ENCODE measurements at regions of chr5 and their contacts with region 1.

Region 1: DNA sequence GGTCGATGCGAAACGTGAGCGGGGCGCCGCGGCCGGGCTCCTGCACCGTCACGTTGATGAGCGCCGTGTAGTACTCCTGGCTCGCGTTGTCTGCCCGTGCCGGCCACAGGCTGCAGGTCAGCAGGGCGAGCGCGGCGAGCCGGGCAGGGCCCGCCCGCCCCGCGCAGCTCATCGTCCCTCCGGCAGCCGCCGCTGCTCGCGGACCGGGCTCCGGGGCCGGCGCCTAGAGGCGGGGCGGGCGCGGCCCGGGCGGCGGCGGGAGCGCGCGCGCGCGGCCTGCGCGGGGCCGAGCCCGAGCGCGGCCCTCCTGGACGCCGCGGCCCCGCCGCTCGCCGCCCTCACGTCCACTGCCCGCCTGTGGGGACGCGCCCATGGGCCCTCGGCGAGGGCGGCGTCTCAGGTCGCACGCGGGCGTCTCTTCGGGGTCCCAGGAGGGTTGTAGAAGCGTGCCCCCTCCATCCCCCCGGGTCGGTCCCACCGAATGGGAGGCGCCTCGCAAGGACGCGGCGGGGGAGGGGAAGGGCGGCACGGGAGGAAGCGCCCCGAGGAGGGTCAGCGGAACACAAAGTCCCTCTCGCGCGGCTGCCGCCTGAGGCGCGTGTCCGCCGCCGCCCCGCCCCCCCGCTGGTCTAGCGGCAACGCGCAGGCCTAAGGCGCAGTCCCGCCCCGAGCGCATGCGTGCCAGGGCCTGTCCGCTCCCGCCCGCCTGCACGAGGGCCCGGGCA is at the start of gene RNF130:
- DNase-seq: peak; percentile 92
- H3K4me3 ChIP-seq: peak within 1 kb of the TSS; percentile 86 to 89 (median 87)
- H3K27ac ChIP-seq: peak within 1 kb of the TSS; percentile 71
- H3K4me1 ChIP-seq: peaks cover 8% of the 10 kb centered on the region
- H3K27me3 ChIP-seq: peaks cover 0 to 5% of the 10 kb centered on the region in 2 experiments
- CTCF ChIP-seq: no peak
- POLR2A ChIP-seq: peak; percentile 54
- total RNA-seq, gene RNF130: 43.0 and 44.0 TPM in 2 replicates

Region 2: GRCh38 chr5:179858586-179859427 is 212.9 kb before region 1 on chr5 and contains the start of gene MRNIP:
- CTCF ChIA-PET with region 1: no interaction called
- POLR2A ChIA-PET with region 1: no interaction called
- dilution Hi-C with region 1: no loop called
- intact Hi-C with region 1: loop called (anchors 5 kb)
- DNase-seq: peak; percentile 97
- H3K4me3 ChIP-seq: peak within 1 kb of the TSS; percentile 60 to 97 (median 75)
- H3K27ac ChIP-seq: no peak within 1 kb of the TSS
- H3K4me1 ChIP-seq: no peaks in the 10 kb centered on the region
- H3K27me3 ChIP-seq: no peaks in the 10 kb centered on the region
- CTCF ChIP-seq: peak in 1 of 2 donors; percentile 9
- POLR2A ChIP-seq: peak; percentile 82
- total RNA-seq, gene MRNIP: 17.6 and 19.1 TPM in 2 replicates

Region 3: GRCh38 chr5:179923436-179923835 is 148.3 kb before region 1 on chr5:
- CTCF ChIA-PET with region 1: no interaction called
- POLR2A ChIA-PET with region 1: no interaction called
- dilution Hi-C with region 1: no loop called
- intact Hi-C with region 1: no loop called
- DNase-seq: no peak
- H3K4me3 ChIP-seq: no peak overlapping the region
- H3K27ac ChIP-seq: no peak overlapping the region
- H3K4me1 ChIP-seq: no peaks in the 10 kb centered on the region
- H3K27me3 ChIP-seq: peaks cover 0 to 3% of the 10 kb centered on the region in 2 experiments
- CTCF ChIP-seq: no peak
- POLR2A ChIP-seq: no peak

Region 4: GRCh38 chr5:179986328-179986727 is 85.4 kb before region 1 on chr5:
- CTCF ChIA-PET with region 1: no interaction called
- POLR2A ChIA-PET with region 1: no interaction called
- dilution Hi-C with region 1: no loop called
- intact Hi-C with region 1: loop called (anchors 5 kb)
- DNase-seq: peak; percentile 45
- H3K4me3 ChIP-seq: no peak overlapping the region
- H3K27ac ChIP-seq: no peak overlapping the region
- H3K4me1 ChIP-seq: no peaks in the 10 kb centered on the region
- H3K27me3 ChIP-seq: no peaks in the 10 kb centered on the region
- CTCF ChIP-seq: no peak
- POLR2A ChIP-seq: no peak

Region 5: DNA sequence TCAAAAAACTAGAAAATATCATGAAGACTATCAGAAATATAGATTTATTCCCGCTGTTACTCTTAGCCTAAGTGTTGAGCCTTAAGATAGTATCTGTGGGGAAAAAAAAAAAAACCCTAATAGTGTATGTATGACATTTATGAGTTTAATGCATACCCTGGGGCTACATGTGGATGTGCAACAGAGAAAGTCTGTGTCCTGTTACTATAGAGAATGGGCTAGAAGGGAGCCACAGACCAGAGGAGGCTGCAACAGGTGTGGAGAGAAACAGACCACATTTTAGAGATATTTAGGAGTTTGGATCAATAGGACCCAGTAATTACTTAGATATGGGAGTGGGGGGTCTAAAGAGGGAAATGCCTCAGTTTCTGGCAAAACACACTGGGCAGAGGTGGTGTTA is 15.5 kb before region 1 on chr5:
- CTCF ChIA-PET with region 1: interaction called, 3 read pairs
- POLR2A ChIA-PET with region 1: no interaction called
- dilution Hi-C with region 1: no loop called
- intact Hi-C with region 1: loop called (anchors 1 kb)
- DNase-seq: no peak
- H3K4me3 ChIP-seq: no peak overlapping the region
- H3K27ac ChIP-seq: peak overlapping the region; percentile 68
- H3K4me1 ChIP-seq: peaks cover 18% of the 10 kb centered on the region
- H3K27me3 ChIP-seq: no peaks in the 10 kb centered on the region
- CTCF ChIP-seq: no peak
- POLR2A ChIP-seq: no peak

Region 6: DNA sequence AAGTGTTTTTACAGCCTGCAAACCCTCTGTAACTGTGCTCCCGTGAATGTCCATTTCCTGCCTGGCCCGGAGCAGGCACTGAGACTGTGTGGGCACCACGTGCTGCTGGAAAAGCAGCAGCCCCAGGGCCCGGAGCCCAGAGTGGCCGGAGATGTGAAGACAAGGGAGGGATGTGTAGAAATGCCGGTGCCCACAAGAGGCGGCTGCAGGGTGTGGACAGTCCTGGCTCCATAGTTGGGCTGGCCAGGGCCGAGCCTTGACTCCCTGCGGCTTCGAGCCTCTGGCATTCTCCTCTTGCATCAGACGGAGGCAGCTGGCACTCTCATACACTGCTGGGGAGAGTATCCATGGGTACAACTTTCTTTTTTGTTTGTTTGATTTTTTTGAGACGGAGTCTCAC is 294.6 kb after region 1 on chr5:
- CTCF ChIA-PET with region 1: no interaction called
- POLR2A ChIA-PET with region 1: no interaction called
- dilution Hi-C with region 1: no loop called
- intact Hi-C with region 1: no loop called
- DNase-seq: peak; percentile 7
- H3K4me3 ChIP-seq: no peak overlapping the region
- H3K27ac ChIP-seq: no peak overlapping the region
- H3K4me1 ChIP-seq: no peaks in the 10 kb centered on the region
- H3K27me3 ChIP-seq: no peaks in the 10 kb centered on the region
- CTCF ChIP-seq: no peak
- POLR2A ChIP-seq: no peak